Testis (tissue), 5 donors: ENCODE measurements at regions of chr11 and their contacts with region 1.

Region 1: GRCh38 chr11:126310228-126310991 is 6.5 kb downstream of the DCPS start:
- DNase-seq: peak; percentile 90
- H3K4me3 ChIP-seq: no peak overlapping the region
- H3K27ac ChIP-seq: peak overlapping the region in 1 of 2 donors; percentile 11
- H3K4me1 ChIP-seq: peaks cover 10% of the 10 kb centered on the region
- H3K27me3 ChIP-seq: no peaks in the 10 kb centered on the region
- CTCF ChIP-seq: peak; percentile 85 to 88 (median 86)
- POLR2A ChIP-seq: no peak

Region 2: GRCh38 chr11:125952973-125953372 is 357.4 kb before region 1 on chr11:
- intact Hi-C with region 1: no loop called
- DNase-seq: peak; percentile 36
- H3K4me3 ChIP-seq: no peak overlapping the region
- H3K27ac ChIP-seq: no peak overlapping the region
- H3K4me1 ChIP-seq: peaks cover 5% of the 10 kb centered on the region
- H3K27me3 ChIP-seq: no peaks in the 10 kb centered on the region
- CTCF ChIP-seq: no peak
- POLR2A ChIP-seq: no peak

Region 3: DNA sequence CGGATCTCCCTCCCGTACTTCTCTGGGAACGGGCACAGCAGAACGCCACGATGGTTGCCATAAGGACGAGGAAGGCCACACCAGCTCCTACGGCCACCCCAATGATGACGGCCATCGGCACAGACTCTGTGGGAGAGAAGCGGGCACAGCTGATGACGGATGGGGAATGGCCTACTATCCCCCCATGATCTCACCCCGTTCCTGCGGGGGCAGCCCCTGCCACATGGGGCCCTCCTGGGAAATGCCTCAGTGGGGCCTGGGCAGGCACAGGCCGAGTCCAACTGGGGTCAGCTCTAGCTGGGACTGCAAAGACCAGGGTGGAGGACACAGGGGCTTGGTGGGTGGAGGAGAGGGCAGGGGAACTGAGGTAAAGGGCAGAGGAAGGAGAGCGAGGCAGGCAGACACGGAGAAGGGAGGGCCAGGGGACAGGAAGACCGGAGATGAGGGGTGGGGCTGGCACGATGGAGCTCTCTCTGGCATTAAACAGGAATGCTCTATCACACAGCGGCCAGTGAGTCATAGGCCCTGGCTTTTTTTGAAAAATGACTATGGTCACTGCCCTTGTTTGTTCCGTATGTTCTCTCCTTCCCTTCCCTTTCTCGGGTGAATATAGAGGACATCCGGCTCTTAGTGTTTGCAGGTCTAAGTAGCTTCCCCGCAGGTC is 121.1 kb after region 1 on chr11:
- intact Hi-C with region 1: loop called (anchors 10 kb)
- DNase-seq: peak; percentile 50
- H3K4me3 ChIP-seq: no peak overlapping the region
- H3K27ac ChIP-seq: peak overlapping the region in 1 of 2 donors; percentile 77
- H3K4me1 ChIP-seq: peaks cover 25% of the 10 kb centered on the region
- H3K27me3 ChIP-seq: no peaks in the 10 kb centered on the region
- CTCF ChIP-seq: no peak
- POLR2A ChIP-seq: no peak

Region 4: DNA sequence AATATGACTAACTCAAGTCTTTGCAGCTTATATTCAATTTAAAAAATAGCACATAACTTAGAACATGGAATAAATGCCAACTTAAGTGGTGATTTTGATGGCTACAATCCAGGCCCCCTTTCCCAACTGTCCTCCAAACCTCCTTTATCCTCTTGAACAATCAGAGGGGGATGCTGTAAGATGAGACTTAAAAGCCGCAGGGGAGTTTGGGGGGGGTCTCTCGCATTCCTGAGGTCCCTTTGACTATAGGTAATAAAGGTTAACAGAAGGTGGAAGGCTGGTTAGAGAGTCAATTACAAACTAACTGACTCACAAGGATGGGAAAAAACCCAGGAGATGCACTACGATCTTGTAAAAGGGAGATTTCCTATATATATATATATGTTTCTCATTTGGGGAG is 588.4 kb after region 1 on chr11:
- intact Hi-C with region 1: no loop called
- DNase-seq: no peak
- H3K4me3 ChIP-seq: no peak overlapping the region
- H3K27ac ChIP-seq: no peak overlapping the region
- H3K4me1 ChIP-seq: no peaks in the 10 kb centered on the region
- H3K27me3 ChIP-seq: no peaks in the 10 kb centered on the region
- CTCF ChIP-seq: no peak
- POLR2A ChIP-seq: no peak